CD8-positive, alpha-beta T cell (primary cell): ENCODE measurements at regions of chr1 and their contacts with region 1.

Region 1: DNA sequence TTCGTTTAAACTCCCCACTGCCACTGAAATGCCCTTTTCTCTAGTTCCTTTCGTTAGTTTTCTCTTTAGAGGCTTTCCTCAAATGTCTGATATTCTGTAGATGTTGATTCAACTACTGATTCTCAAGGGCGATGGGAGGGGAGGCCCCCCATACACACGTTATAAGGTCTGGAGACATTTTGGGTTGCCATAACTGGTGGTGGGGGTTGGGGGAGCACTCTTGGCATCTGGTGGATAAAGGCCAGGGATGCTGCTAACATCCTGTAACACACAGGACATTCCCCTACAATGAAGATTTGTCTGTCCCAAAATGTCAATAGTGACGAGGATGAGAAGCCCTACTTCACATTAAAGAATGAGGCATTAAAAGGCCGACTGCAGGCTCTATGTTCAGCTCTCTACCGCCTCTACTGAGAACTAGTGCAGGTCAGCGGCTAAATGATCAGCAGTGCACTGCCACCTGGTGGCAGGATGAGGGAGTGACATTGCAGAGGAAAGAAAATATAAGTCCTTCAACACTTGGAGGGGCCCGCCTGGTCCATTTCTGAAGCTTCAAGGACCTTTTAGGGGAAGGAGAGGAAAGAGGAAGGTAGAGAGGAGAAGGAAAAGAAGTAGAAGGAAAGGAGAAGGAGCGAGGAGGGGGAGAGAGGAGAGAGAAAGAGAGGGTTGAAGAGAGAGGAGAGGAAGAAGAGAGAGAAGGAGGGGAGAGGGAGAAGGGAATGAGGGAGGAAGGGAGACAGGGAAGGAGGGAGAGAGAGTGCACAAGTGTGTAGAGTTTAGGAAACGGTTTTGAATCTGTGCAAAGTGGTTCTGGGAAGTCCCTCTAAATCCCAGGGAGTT is 29.4 kb downstream of the ALG14 start:
- DNase-seq: peak; percentile 56 to 87 (median 78)
- ATAC-seq: peak; percentile 100
- H3K4me3 ChIP-seq: no peak overlapping the region
- H3K4me3 Mint-ChIP-seq: no peak overlapping the region
- H3K27ac ChIP-seq: no peak overlapping the region
- H3K27ac Mint-ChIP-seq: no peak overlapping the region
- H3K4me1 ChIP-seq: no peaks in the 10 kb centered on the region
- H3K4me1 Mint-ChIP-seq: no peaks in the 10 kb centered on the region
- H3K27me3 ChIP-seq: no peaks in the 10 kb centered on the region
- H3K27me3 Mint-ChIP-seq: no peaks in the 10 kb centered on the region
- CTCF ChIP-seq: peak; percentile 100

Region 2: DNA sequence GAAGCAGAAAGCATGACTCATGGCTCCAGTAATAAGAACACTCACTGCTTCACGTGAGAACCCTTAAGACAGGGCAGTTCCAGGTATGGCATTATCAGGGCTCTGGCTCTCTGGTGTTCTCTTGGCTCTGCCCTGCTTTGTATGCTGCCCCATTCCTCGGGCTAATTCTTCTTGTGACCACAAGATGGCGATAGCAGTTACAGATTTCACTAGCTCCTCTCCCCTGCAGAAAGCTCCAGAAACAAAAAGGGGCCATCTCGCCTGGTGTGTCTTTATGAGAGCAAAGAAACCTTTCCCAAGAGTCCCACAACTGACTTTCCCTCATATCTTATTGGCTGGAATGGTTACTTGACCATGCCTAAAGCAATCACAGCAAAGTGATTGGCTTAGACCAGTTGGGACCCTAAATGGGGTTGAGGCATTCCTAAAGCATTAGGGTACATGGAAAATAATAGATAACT is 561.9 kb before region 1 on chr1:
- CTCF ChIA-PET with region 1: interaction called, 3 read pairs
- POLR2A ChIA-PET with region 1: no interaction called
- intact Hi-C with region 1: loop called (anchors 2 kb)
- DNase-seq: peak in 7 of 9 experiments; percentile 11 to 68 (median 32)
- ATAC-seq: peak; percentile 65
- H3K4me3 ChIP-seq: no peak overlapping the region
- H3K4me3 Mint-ChIP-seq: no peak overlapping the region
- H3K27ac ChIP-seq: no peak overlapping the region
- H3K27ac Mint-ChIP-seq: no peak overlapping the region
- H3K4me1 ChIP-seq: no peaks in the 10 kb centered on the region
- H3K4me1 Mint-ChIP-seq: no peaks in the 10 kb centered on the region
- H3K27me3 ChIP-seq: no peaks in the 10 kb centered on the region
- H3K27me3 Mint-ChIP-seq: no peaks in the 10 kb centered on the region
- CTCF ChIP-seq: peak; percentile 76

Region 3: DNA sequence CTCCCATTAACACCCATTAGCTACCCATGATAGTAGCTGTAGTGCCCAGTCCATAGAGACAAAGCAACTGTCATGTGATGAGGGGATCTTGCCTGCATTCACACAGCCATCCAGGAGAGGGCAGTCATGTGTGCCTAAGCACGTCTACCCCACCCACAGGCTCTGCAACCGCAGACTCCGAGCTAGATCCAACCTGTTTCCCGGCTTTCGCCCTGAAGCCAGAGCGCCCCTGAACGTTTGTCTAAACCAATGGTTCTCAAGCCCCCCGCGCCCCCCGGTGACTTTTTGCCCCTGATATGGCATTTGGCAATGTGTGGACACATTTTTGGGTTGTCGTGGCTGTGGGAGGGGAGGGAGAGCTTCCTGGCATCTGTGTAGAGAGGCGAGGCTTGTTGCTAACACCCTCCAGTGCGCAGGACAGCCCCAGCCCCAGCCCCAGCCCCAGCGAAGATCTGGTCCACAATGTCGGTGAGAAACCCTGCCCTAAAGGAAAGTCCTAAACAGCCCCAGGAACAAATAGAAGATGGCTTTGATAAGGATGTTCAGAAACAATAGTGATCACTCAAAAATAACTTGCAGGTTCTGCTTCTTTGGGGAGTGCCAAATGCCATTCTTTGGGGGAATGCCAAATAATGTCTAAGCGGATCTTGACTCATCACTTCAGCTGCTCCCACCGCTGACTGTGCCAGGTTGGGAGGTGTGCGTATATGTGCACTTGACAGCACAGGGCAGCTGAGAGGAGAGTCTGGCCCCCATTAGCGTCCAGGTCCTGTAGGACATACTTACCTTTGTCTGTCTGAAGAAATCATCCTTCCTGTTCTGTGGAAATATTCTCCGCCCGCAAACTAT is 188.7 kb before region 1 on chr1:
- CTCF ChIA-PET with region 1: interaction called, 158 read pairs
- POLR2A ChIA-PET with region 1: interaction called, 7 read pairs
- intact Hi-C with region 1: loop called (anchors 1 kb)
- DNase-seq: peak; percentile 53 to 88 (median 74)
- ATAC-seq: peak; percentile 98
- H3K4me3 ChIP-seq: peak overlapping the region; percentile 50 to 51
- H3K4me3 Mint-ChIP-seq: no peak overlapping the region
- H3K27ac ChIP-seq: peak overlapping the region in 1 of 2 experiments; percentile 13
- H3K27ac Mint-ChIP-seq: no peak overlapping the region
- H3K4me1 ChIP-seq: no peaks in the 10 kb centered on the region
- H3K4me1 Mint-ChIP-seq: no peaks in the 10 kb centered on the region
- H3K27me3 ChIP-seq: no peaks in the 10 kb centered on the region
- H3K27me3 Mint-ChIP-seq: peaks cover 6% of the 10 kb centered on the region
- CTCF ChIP-seq: peak; percentile 72

Region 4: GRCh38 chr1:94873522-94874351 is 169.6 kb before region 1 on chr1:
- CTCF ChIA-PET with region 1: interaction called, 10 read pairs
- POLR2A ChIA-PET with region 1: no interaction called
- intact Hi-C with region 1: no loop called
- DNase-seq: no peak
- ATAC-seq: no peak
- H3K4me3 ChIP-seq: no peak overlapping the region
- H3K4me3 Mint-ChIP-seq: no peak overlapping the region
- H3K27ac ChIP-seq: no peak overlapping the region
- H3K27ac Mint-ChIP-seq: peak overlapping the region; percentile 28
- H3K4me1 ChIP-seq: no peaks in the 10 kb centered on the region
- H3K4me1 Mint-ChIP-seq: peaks cover 8% of the 10 kb centered on the region
- H3K27me3 ChIP-seq: no peaks in the 10 kb centered on the region
- H3K27me3 Mint-ChIP-seq: peaks cover 3% of the 10 kb centered on the region
- CTCF ChIP-seq: no peak

Region 5: DNA sequence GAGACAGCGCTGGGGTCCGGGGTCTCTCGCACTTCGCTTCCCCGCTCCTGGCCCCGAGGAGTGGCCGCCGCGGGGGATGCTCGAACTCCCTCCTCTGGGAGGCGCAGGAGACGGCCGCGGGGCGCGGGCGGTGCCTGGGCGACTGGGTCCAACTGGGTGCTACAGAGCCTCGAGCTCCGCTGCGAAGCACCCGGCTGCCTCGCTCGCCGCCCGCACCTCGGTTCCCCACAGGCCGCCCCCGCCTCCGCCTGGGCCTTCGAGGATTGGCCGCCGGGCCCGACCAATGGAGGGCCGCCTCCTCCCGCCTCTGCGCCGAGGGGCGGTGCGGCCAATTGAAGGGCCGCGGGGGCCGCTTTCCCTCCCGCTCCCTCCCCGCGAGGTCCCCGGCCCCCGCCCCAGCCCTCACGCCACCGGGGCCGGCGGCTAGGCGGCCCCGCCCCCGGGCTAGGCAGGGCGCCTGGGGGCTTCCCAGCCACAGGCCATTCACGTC is 116.4 kb before region 1 on chr1 and contains the start of gene CNN3:
- CTCF ChIA-PET with region 1: interaction called, 6 read pairs
- POLR2A ChIA-PET with region 1: no interaction called
- intact Hi-C with region 1: loop called in 1 of 2 experiments (anchors 2 kb)
- DNase-seq: peak; percentile 38 to 83 (median 70)
- ATAC-seq: peak; percentile 85
- H3K4me3 ChIP-seq: peak within 1 kb of the TSS; percentile 41 to 62
- H3K4me3 Mint-ChIP-seq: peak within 1 kb of the TSS; percentile 91
- H3K27ac ChIP-seq: peak within 1 kb of the TSS in 1 of 2 experiments; percentile 11
- H3K27ac Mint-ChIP-seq: peak within 1 kb of the TSS; percentile 74
- H3K4me1 ChIP-seq: peaks cover 16% of the 10 kb centered on the region
- H3K4me1 Mint-ChIP-seq: peaks cover 25% of the 10 kb centered on the region
- H3K27me3 ChIP-seq: peaks cover 0 to 4% of the 10 kb centered on the region in 2 experiments
- H3K27me3 Mint-ChIP-seq: peaks cover 9% of the 10 kb centered on the region
- CTCF ChIP-seq: no peak
- total RNA-seq, gene CNN3: 7.5 to 9.4 TPM

Region 6: DNA sequence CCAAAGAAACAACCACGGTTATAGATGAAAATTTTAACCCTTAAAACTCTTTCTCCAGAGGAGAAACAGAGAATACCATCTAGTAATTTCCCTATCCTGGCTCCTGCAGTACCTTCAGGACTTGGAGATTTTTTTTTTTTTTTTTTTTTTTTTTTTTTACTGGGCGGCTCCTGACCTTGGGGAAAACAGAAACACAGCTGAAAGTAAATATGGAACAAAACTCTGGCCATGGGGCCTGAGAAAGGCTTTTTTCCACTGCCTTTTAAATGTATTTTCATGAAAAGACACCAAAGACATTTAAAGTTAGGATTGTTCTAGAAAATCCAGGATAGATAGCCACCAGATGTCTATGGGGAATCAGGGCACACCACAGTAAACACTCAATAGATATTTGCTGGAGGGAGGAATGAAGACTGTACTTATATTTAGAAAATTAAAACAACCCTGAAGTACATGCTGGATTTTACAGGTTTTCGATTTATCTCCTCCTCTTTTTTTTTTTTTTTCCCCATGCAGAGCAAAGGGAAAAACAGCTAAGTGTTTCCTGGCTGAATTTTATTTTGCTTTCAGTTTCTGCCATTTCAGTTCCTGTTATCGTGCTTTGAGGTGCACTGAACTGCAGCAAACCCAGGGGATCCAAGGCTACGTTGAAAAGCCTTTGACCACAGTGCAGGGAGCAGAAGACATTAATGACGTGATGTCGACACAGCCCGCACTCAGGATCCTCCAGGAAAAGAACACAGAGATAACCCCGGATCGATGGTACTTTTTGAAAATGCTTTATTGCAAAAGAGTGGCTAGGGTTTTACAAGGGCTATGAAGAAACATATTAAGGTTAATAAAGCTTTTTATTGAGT is 80.7 kb before region 1 on chr1:
- CTCF ChIA-PET with region 1: interaction called, 3 read pairs
- POLR2A ChIA-PET with region 1: no interaction called
- intact Hi-C with region 1: loop called in 1 of 2 experiments (anchors 10 kb)
- DNase-seq: peak in 7 of 9 experiments; percentile 4 to 64 (median 22)
- ATAC-seq: peak; percentile 38
- H3K4me3 ChIP-seq: peak overlapping the region; percentile 57 to 64
- H3K4me3 Mint-ChIP-seq: peak overlapping the region; percentile 96
- H3K27ac ChIP-seq: peak overlapping the region; percentile 44 to 67
- H3K27ac Mint-ChIP-seq: peak overlapping the region; percentile 98
- H3K4me1 ChIP-seq: peaks cover 15% of the 10 kb centered on the region
- H3K4me1 Mint-ChIP-seq: peaks cover 19% of the 10 kb centered on the region
- H3K27me3 ChIP-seq: no peaks in the 10 kb centered on the region
- H3K27me3 Mint-ChIP-seq: no peaks in the 10 kb centered on the region
- CTCF ChIP-seq: no peak

Region 7: DNA sequence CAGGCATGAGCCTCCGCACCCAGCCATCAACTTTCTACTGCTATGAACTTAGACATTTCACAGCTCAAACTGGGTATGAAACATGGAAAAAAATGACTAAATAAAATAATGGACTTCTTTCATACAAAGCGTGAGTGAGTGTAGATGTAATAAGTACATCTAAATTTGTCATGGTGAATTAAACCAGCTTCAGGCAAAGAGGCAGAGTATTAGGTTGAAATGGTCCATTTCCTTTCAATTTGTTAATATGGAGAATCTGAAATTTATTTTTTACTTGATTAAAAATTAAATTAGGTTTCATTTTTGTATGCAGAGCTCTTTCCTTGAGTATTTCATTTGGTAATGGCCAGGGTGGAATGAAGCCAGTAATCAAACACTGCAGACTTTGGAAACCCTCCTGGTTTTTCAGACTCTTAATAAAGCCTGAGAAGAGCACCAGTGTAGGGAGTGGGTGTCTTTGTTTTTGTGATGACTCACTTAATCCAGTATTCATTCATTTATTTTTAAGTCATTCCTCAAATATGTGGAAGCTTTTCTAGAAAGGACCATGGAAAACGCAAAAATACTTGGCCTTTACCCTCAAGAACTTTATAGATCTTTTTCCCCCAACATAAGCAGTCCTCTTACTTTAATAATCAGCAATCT is 19.8 kb before region 1 on chr1:
- CTCF ChIA-PET with region 1: interaction called, 13 read pairs
- POLR2A ChIA-PET with region 1: no interaction called
- intact Hi-C with region 1: no loop called
- DNase-seq: no peak
- ATAC-seq: no peak
- H3K4me3 ChIP-seq: no peak overlapping the region
- H3K4me3 Mint-ChIP-seq: no peak overlapping the region
- H3K27ac ChIP-seq: no peak overlapping the region
- H3K27ac Mint-ChIP-seq: no peak overlapping the region
- H3K4me1 ChIP-seq: no peaks in the 10 kb centered on the region
- H3K4me1 Mint-ChIP-seq: no peaks in the 10 kb centered on the region
- H3K27me3 ChIP-seq: no peaks in the 10 kb centered on the region
- H3K27me3 Mint-ChIP-seq: no peaks in the 10 kb centered on the region
- CTCF ChIP-seq: no peak